Psoas muscle (tissue), 8 donors: ENCODE measurements at regions of chr3 and their contacts with region 1.

Region 1: GRCh38 chr3:119930286-119930685 is 148.4 kb downstream of the NR1I2 start:
- DNase-seq: no peak
- ATAC-seq: peak in 1 of 4 donors; percentile 37
- H3K4me3 ChIP-seq: no peak overlapping the region
- H3K27ac ChIP-seq: no peak overlapping the region
- H3K4me1 ChIP-seq: peaks cover 5% of the 10 kb centered on the region
- H3K27me3 ChIP-seq: no peaks in the 10 kb centered on the region
- CTCF ChIP-seq: no peak

Region 2: DNA sequence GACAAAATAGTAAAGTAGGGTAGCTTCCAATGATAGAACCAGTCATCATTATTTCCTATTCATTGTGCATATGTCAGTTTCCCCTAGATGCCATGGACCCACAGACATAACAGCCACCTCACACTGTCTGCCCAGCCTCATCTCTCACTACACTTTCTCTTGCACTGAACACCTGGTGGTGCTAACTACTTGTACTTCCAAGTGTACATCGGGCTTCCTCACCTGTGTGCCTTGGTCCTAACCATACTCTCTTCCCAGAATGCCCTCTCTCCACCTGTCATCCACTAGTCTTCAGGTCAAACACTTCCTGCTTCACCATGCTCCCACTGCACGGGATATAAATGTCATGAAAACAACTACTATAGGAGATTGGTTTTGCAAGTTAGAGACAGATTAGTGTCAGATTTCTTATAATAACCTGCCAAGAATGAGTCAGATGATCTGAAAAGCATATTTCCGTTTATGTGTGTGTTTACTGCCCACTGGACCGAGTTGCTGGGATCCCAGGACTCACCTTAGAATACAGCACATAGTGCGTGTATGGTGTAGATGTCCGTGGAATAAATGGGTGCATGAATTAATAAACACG is 311.3 kb before region 1 on chr3:
- intact Hi-C with region 1: no loop called
- DNase-seq: no peak
- ATAC-seq: peak; percentile 23 to 63 (median 44)
- H3K4me3 ChIP-seq: peak overlapping the region; percentile 37
- H3K27ac ChIP-seq: peak overlapping the region; percentile 69
- H3K4me1 ChIP-seq: peaks cover 27% of the 10 kb centered on the region
- H3K27me3 ChIP-seq: no peaks in the 10 kb centered on the region
- CTCF ChIP-seq: no peak

Region 3: DNA sequence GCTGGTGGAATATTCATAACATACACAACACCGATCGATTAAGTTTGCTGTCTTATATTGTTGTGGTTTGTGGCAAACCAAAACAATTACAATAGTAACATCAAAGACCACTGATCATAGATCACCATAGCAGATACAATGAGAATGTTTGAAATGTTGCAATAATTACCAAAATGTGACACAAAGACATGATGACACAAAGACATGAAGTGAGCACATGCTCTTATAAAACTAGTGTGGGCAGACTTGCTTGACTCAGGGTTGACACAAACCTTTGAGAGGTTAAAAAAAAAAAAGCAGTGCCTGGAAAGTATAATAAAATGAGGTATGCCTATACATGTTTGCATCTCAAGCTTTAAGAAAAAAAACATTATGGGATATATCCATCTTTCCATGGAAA is 18.1 kb before region 1 on chr3:
- intact Hi-C with region 1: no loop called
- DNase-seq: no peak
- ATAC-seq: no peak
- H3K4me3 ChIP-seq: no peak overlapping the region
- H3K27ac ChIP-seq: no peak overlapping the region
- H3K4me1 ChIP-seq: no peaks in the 10 kb centered on the region
- H3K27me3 ChIP-seq: no peaks in the 10 kb centered on the region
- CTCF ChIP-seq: no peak

Region 4: GRCh38 chr3:119955972-119956371 is 25.7 kb after region 1 on chr3:
- intact Hi-C with region 1: loop called in 1 of 2 experiments (anchors 2 kb)
- DNase-seq: no peak
- ATAC-seq: peak in 1 of 4 donors; percentile 42
- H3K4me3 ChIP-seq: no peak overlapping the region
- H3K27ac ChIP-seq: no peak overlapping the region
- H3K4me1 ChIP-seq: peaks cover 30% of the 10 kb centered on the region
- H3K27me3 ChIP-seq: no peaks in the 10 kb centered on the region
- CTCF ChIP-seq: no peak